PC-3 (cell line): ENCODE measurements at regions of chr17 and their contacts with region 1.

Region 1: GRCh38 chr17:55053855-55054254 is 85.3 kb downstream of the STXBP4 start:
- DNase-seq: peak; percentile 39
- ATAC-seq: no peak
- H3K4me3 ChIP-seq: no peak overlapping the region
- H3K27ac ChIP-seq: no peak overlapping the region
- H3K4me1 ChIP-seq: peaks cover 16% of the 10 kb centered on the region
- H3K27me3 ChIP-seq: no peaks in the 10 kb centered on the region
- CTCF ChIP-seq: peak; percentile 75

Region 2: DNA sequence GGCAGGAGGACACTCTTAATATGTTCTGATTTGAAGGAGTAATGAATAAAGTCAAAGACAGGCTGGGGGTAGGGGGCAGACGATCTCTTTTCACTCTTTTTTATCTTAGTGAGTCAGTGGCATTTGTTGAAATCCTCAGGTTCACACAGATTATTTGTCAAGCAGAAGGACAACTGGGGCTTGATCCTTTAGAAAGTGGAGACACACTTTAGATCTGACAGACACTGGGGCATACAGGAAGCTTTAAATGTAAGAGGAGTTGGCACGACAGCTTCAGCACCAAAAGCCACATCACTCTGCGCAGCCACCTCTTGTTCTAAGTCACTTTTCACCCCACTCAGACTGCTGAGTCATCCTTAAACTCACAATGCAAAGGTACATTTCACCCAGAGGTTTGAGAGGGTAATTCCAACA is 36.2 kb after region 1 on chr17:
- CTCF ChIA-PET with region 1: no interaction called
- POLR2A ChIA-PET with region 1: no interaction called
- intact Hi-C with region 1: loop called (anchors 2 kb)
- DNase-seq: peak; percentile 82
- ATAC-seq: peak; percentile 86
- H3K4me3 ChIP-seq: no peak overlapping the region
- H3K27ac ChIP-seq: peak overlapping the region; percentile 65
- H3K4me1 ChIP-seq: peaks cover 29% of the 10 kb centered on the region
- H3K27me3 ChIP-seq: no peaks in the 10 kb centered on the region
- CTCF ChIP-seq: no peak

Region 3: DNA sequence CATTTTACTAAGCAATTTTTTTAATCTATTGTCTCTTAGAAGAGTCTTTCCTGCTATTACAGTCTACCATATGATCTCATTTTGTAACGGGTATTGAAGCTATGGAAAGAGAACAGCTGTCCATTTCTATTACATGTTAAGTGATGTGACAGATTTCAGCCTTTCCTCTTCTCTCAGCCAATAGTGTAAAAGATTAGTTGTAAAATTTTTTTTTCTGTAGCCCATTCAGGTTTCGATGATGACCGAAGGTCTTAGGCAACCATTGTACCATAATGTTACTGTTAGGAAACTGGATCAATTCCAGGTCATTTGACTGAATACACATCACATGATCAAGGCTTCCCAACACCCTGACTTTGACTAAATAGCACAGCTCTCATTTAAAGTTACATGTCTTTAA is 63.3 kb after region 1 on chr17:
- CTCF ChIA-PET with region 1: no interaction called
- POLR2A ChIA-PET with region 1: no interaction called
- intact Hi-C with region 1: no loop called
- DNase-seq: no peak
- ATAC-seq: no peak; the same call in 1 of the 2 replicates
- H3K4me3 ChIP-seq: no peak overlapping the region
- H3K27ac ChIP-seq: no peak overlapping the region
- H3K4me1 ChIP-seq: no peaks in the 10 kb centered on the region
- H3K27me3 ChIP-seq: no peaks in the 10 kb centered on the region
- CTCF ChIP-seq: no peak

Region 4: GRCh38 chr17:55134486-55135157 is 80.8 kb after region 1 on chr17:
- CTCF ChIA-PET with region 1: no interaction called
- POLR2A ChIA-PET with region 1: no interaction called
- intact Hi-C with region 1: loop called (anchors 2 kb)
- DNase-seq: peak; percentile 69
- ATAC-seq: peak; percentile 82
- H3K4me3 ChIP-seq: peak overlapping the region; percentile 17; the same call in 1 of the 2 replicates
- H3K27ac ChIP-seq: peak overlapping the region; percentile 77
- H3K4me1 ChIP-seq: peaks cover 15% of the 10 kb centered on the region
- H3K27me3 ChIP-seq: no peaks in the 10 kb centered on the region
- CTCF ChIP-seq: no peak